Endothelial cell of umbilical vein (primary cell): ENCODE measurements at regions of chr4 and their contacts with region 1.

Region 1: GRCh38 chr4:48195374-48195773 is 61.3 kb upstream of the TXK start:
- DNase-seq: peak; percentile 72
- H3K4me3 ChIP-seq: no peak overlapping the region
- H3K27ac ChIP-seq: no peak overlapping the region
- H3K4me1 ChIP-seq: peaks cover 5% of the 10 kb centered on the region
- H3K27me3 ChIP-seq: peaks cover 3 to 5% of the 10 kb centered on the region in 2 experiments
- CTCF ChIP-seq: no peak
- POLR2A ChIP-seq: no peak

Region 2: DNA sequence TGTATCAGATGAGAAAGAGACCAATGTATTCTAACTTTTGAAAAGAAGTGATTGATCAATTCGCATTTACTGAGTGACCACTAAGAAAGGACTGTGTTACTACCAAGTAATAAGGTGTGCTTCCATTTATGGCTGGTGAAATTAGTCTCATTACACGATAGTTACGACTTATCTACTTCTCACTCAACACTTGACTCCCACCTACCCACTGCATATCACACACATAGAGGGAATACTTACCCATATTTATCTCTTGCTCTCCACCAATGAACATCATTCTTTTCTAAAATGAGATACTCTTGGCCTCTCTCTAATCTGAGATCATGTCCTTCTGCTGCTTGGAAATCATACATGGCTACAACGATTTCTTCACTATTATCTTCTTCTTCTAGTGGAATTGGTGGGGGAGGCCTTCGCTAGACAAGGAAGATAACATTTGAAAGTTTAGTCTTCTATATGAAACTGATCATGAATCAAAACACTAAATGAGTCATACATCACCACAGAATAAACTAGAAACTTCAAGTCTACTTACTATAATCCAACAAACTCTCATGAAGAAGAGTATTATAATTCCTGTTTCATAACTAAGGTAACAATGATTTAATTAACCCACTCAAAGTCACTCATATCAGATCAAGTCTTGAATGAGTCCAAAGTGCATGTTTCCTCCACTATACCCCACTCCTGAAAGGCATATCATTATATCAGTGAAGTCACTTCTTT is 27.7 kb before region 1 on chr4:
- CTCF ChIA-PET with region 1: no interaction called
- POLR2A ChIA-PET with region 1: no interaction called
- dilution Hi-C with region 1: no loop called
- intact Hi-C with region 1: loop called (anchors 2 kb)
- DNase-seq: no peak
- H3K4me3 ChIP-seq: no peak overlapping the region
- H3K27ac ChIP-seq: no peak overlapping the region
- H3K4me1 ChIP-seq: no peaks in the 10 kb centered on the region
- H3K27me3 ChIP-seq: peaks cover 0 to under 1% of the 10 kb centered on the region in 2 experiments
- CTCF ChIP-seq: no peak
- POLR2A ChIP-seq: no peak